HepG2 (cell line): ENCODE measurements at regions of chr11 and their contacts with region 1.

Region 1: GRCh38 chr11:121112498-121113455 is 11.7 kb downstream of the TECTA start:
- DNase-seq: peak; percentile 52
- ATAC-seq: peak; percentile 95
- H3K4me3 ChIP-seq: no peak overlapping the region
- H3K27ac ChIP-seq: no peak overlapping the region
- H3K4me1 ChIP-seq: no peaks in the 10 kb centered on the region
- H3K27me3 ChIP-seq: peaks cover 0 to 18% of the 10 kb centered on the region in 2 experiments; a peak in 3 of 5 replicates
- CTCF ChIP-seq: peak; percentile 81
- EP300 ChIP-seq: no peak
- POLR2A ChIP-seq: no peak
- RAD21 ChIP-seq: peak; percentile 74

Region 2: GRCh38 chr11:120929664-120930154 is 183.1 kb before region 1 on chr11:
- CTCF ChIA-PET with region 1: interaction called, 3 read pairs
- POLR2A ChIA-PET with region 1: no interaction called
- in situ Hi-C with region 1: no loop called
- intact Hi-C with region 1: loop called (anchors 2 kb)
- DNase-seq: peak; percentile 30
- ATAC-seq: peak; percentile 86
- H3K4me3 ChIP-seq: no peak overlapping the region
- H3K27ac ChIP-seq: no peak overlapping the region
- H3K4me1 ChIP-seq: no peaks in the 10 kb centered on the region
- H3K27me3 ChIP-seq: no peaks in the 10 kb centered on the region
- CTCF ChIP-seq: peak; percentile 81
- EP300 ChIP-seq: no peak
- POLR2A ChIP-seq: no peak
- RAD21 ChIP-seq: no peak

Region 3: DNA sequence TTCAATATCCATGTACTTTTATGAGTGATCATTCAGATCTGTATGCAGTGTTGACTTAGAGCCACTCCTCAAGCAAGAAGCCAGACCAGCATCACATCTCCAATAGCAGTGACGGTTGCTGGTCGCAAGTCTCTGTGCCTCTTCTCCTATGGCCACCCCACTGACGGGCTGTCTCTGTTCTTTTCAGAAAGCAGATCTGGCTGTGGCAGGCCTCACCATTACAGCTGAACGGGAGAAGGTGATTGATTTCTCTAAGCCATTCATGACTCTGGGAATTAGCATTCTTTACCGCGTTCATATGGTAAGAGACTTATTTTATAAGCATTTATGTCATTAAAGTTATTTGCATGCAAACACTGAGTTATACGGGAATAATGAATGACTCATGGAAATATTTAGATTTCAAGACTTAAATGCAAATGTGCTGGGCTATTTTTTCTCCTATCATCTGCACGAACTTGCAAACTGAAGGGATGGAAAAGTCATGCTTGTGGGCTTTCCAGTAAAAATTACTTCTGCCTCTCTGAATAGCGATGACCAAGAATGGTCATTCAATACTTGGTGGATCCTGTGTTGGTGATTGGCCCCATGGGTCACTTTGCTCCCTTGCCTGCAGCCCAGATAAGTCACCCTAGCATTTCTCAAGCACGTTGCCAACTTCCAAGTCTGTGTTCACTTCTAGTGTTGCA is 172.5 kb before region 1 on chr11:
- CTCF ChIA-PET with region 1: no interaction called
- POLR2A ChIA-PET with region 1: no interaction called
- in situ Hi-C with region 1: loop called (anchors 5 kb)
- intact Hi-C with region 1: loop called (anchors 2 kb)
- DNase-seq: no peak
- ATAC-seq: no peak
- H3K4me3 ChIP-seq: no peak overlapping the region
- H3K27ac ChIP-seq: no peak overlapping the region
- H3K4me1 ChIP-seq: no peaks in the 10 kb centered on the region
- H3K27me3 ChIP-seq: peaks cover 1 to 4% of the 10 kb centered on the region in 2 experiments; a peak in 1 of 5 replicates
- CTCF ChIP-seq: no peak
- EP300 ChIP-seq: no peak
- POLR2A ChIP-seq: no peak
- RAD21 ChIP-seq: no peak

Region 4: GRCh38 chr11:121032546-121032945 is 80.2 kb before region 1 on chr11:
- CTCF ChIA-PET with region 1: no interaction called
- POLR2A ChIA-PET with region 1: no interaction called
- in situ Hi-C with region 1: no loop called
- intact Hi-C with region 1: loop called (anchors 1 kb)
- DNase-seq: peak; percentile 21
- ATAC-seq: no peak; the same call in 1 of the 3 replicates
- H3K4me3 ChIP-seq: no peak overlapping the region
- H3K27ac ChIP-seq: no peak overlapping the region
- H3K4me1 ChIP-seq: peaks cover 20% of the 10 kb centered on the region
- H3K27me3 ChIP-seq: no peaks in the 10 kb centered on the region
- CTCF ChIP-seq: peak; percentile 64
- EP300 ChIP-seq: no peak
- POLR2A ChIP-seq: no peak
- RAD21 ChIP-seq: 0 out of 2 replicates have a peak, but pooled peaks have one; percentile 27

Region 5: DNA sequence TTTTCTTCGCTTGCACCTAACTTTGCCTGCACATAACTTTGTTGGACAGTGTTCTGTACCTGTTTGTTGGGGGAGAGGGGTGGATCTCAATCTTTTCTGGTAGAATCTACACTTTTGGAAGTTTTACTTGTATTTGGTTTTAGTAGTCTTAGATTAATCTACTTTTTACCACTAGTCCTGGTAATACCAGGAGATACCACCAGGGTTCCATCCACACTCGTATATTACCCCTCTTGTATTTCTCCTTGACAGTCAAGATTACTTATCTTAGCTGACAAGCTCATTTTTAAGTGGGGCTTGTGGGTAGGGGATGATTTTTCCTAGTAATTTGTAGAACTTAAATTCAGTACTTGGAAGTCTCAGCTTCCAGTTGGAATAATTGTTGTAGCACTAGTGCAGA is 49.0 kb before region 1 on chr11:
- CTCF ChIA-PET with region 1: no interaction called
- POLR2A ChIA-PET with region 1: no interaction called
- in situ Hi-C with region 1: no loop called
- intact Hi-C with region 1: no loop called
- DNase-seq: peak; percentile 10
- ATAC-seq: no peak
- H3K4me3 ChIP-seq: no peak overlapping the region
- H3K27ac ChIP-seq: no peak overlapping the region
- H3K4me1 ChIP-seq: peaks cover 35% of the 10 kb centered on the region
- H3K27me3 ChIP-seq: no peaks in the 10 kb centered on the region
- CTCF ChIP-seq: no peak
- EP300 ChIP-seq: no peak
- POLR2A ChIP-seq: no peak
- RAD21 ChIP-seq: no peak

Region 6: GRCh38 chr11:121141066-121141465 is 28.3 kb after region 1 on chr11:
- CTCF ChIA-PET with region 1: no interaction called
- POLR2A ChIA-PET with region 1: no interaction called
- in situ Hi-C with region 1: no loop called
- intact Hi-C with region 1: no loop called
- DNase-seq: no peak
- ATAC-seq: no peak
- H3K4me3 ChIP-seq: no peak overlapping the region
- H3K27ac ChIP-seq: no peak overlapping the region
- H3K4me1 ChIP-seq: no peaks in the 10 kb centered on the region
- H3K27me3 ChIP-seq: peaks cover 1 to 9% of the 10 kb centered on the region in 2 experiments; a peak in 2 of 5 replicates
- CTCF ChIP-seq: no peak
- EP300 ChIP-seq: no peak
- POLR2A ChIP-seq: no peak
- RAD21 ChIP-seq: no peak

Region 7: DNA sequence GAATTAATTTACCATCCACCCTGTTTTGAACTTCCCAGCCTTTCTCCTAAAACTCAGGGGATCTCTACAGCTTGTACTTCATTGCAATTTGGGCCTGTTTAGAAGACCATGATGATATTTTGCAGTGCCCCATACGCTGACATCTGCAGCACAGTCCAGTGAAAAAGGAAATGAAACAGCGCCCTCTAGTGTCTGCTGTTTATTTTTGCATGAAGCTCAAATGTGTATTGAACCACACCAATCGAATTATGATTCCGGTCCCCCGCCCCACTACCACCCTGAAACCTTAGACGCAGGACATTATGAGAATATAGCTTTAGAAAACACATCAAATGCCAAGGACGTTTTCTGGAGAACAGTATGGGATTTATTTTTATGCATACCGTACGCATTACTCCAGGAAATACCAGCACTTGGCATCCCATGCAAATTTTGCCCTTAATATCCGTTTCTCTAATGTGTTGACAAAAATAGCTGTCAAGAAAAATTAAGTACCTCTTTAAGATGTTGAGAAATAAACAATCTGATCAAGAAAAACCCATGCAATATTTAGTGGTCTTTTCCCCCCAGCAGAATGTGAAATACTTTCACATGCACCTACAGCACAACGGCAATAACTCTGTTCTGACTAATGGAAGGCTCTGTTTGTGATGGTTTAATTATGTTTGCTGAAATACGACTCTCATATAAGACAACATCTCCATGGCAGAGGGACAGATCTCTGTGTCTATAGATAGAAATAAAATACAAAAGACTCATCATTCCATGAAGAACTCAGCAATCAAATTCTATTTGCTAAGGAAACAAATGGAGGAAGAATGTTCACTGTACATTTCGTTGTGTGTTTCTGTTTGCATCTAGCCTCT is 82.2 kb after region 1 on chr11:
- CTCF ChIA-PET with region 1: no interaction called
- POLR2A ChIA-PET with region 1: no interaction called
- in situ Hi-C with region 1: no loop called
- intact Hi-C with region 1: loop called (anchors 10 kb)
- DNase-seq: peak; percentile 59
- ATAC-seq: peak; percentile 92
- H3K4me3 ChIP-seq: no peak overlapping the region
- H3K27ac ChIP-seq: no peak overlapping the region
- H3K4me1 ChIP-seq: no peaks in the 10 kb centered on the region
- H3K27me3 ChIP-seq: peaks cover 0 to 3% of the 10 kb centered on the region in 2 experiments; a peak in 1 of 5 replicates
- CTCF ChIP-seq: peak; percentile 83
- EP300 ChIP-seq: no peak
- POLR2A ChIP-seq: no peak
- RAD21 ChIP-seq: peak; percentile 61; the same call in 1 of the 2 replicates